Activated naive CD4-positive, alpha-beta T cell treated with anti-CD3 and anti-CD28 coated beads for 36 hours (primary cell): ENCODE measurements at regions of chr18 and their contacts with region 1.

Region 1: DNA sequence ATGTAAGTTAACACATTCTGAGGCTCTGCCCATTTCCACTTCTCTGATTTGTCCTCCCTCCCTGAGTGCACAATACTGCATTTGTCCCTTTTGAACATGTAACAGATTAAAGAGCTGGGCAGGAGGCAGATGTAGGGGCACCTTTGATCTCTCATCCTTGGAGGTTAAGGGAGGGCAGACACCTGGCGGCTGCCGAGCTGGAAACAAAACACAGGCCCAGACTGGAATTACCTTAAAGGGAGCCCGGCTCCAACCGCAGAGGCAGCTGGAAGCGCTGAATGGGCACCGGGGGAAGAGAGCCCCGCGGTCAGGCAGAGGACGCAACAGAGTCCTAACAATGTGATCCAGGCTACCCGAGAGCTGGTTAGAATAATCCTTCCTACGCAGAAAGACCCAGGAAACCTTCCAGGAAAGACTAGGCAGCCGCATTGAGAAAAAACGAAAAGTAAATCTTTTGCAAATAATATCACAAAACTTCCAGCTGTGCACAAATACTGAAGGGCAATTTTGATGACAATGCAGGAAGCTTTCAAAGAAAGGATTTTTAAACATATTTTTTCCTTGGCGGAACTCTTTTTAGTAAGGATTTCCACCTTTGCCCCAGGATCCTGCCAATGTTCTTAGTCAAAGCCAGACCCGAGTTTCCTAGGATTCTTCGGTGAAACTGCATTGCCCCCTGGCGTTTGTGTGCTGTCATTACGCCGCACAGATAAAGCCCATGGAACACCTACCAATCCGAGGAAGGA is 216.0 kb downstream of the TGIF1 start:
- DNase-seq: peak; percentile 84
- H3K4me3 Mint-ChIP-seq: peak overlapping the region; percentile 38
- H3K27ac Mint-ChIP-seq: no peak overlapping the region
- H3K4me1 Mint-ChIP-seq: peaks cover 26% of the 10 kb centered on the region
- H3K27me3 Mint-ChIP-seq: no peaks in the 10 kb centered on the region

Region 2: GRCh38 chr18:3151399-3152264 is 514.3 kb before region 1 on chr18:
- CTCF ChIA-PET with region 1: no interaction called
- intact Hi-C with region 1: loop called (anchors 10 kb)
- DNase-seq: no peak
- H3K4me3 Mint-ChIP-seq: no peak overlapping the region
- H3K27ac Mint-ChIP-seq: no peak overlapping the region
- H3K4me1 Mint-ChIP-seq: peaks cover 6% of the 10 kb centered on the region
- H3K27me3 Mint-ChIP-seq: no peaks in the 10 kb centered on the region

Region 3: GRCh38 chr18:3281456-3282400 is 384.2 kb before region 1 on chr18:
- CTCF ChIA-PET with region 1: interaction called, 138 read pairs
- intact Hi-C with region 1: loop called (anchors 1 kb)
- DNase-seq: no peak
- H3K4me3 Mint-ChIP-seq: no peak overlapping the region
- H3K27ac Mint-ChIP-seq: no peak overlapping the region
- H3K4me1 Mint-ChIP-seq: peaks cover 6% of the 10 kb centered on the region
- H3K27me3 Mint-ChIP-seq: no peaks in the 10 kb centered on the region

Region 4: DNA sequence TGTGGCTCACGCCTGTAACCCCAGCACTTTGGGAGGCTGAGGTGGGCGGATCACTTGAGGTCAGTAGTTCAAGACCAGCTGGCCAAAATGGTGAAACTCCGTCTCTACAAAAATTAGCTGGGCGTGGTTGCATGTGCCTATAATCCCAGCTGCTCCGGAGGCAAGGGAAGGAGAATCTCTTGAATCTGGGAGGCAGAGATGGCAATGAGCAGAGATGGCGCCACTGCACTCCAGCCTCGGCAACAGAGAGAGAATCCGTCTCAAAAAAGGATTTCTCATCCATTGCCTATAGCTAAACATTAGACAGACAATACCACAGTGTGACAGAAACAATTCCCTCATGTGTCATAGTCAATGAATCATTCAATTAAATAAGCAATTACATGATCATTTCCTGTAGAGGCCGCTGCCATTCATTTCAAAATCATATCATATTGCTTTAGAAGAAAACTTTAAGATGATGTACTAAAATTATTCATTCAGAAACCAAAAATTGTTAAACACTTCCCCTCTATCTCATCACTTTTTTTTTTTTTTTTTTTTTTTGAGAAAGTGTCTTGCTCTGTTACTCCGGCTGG is 285.5 kb before region 1 on chr18:
- CTCF ChIA-PET with region 1: interaction called, 10 read pairs
- intact Hi-C with region 1: loop called (anchors 1 kb)
- DNase-seq: peak; percentile 37
- H3K4me3 Mint-ChIP-seq: no peak overlapping the region
- H3K27ac Mint-ChIP-seq: no peak overlapping the region
- H3K4me1 Mint-ChIP-seq: peaks cover 7% of the 10 kb centered on the region
- H3K27me3 Mint-ChIP-seq: no peaks in the 10 kb centered on the region

Region 5: GRCh38 chr18:3454365-3455089 is 211.4 kb before region 1 on chr18:
- CTCF ChIA-PET with region 1: interaction called, 47 read pairs
- intact Hi-C with region 1: loop called (anchors 1 kb)
- DNase-seq: peak; percentile 31
- H3K4me3 Mint-ChIP-seq: peak overlapping the region; percentile 89
- H3K27ac Mint-ChIP-seq: peak overlapping the region; percentile 99
- H3K4me1 Mint-ChIP-seq: peaks cover 63% of the 10 kb centered on the region
- H3K27me3 Mint-ChIP-seq: no peaks in the 10 kb centered on the region

Region 6: DNA sequence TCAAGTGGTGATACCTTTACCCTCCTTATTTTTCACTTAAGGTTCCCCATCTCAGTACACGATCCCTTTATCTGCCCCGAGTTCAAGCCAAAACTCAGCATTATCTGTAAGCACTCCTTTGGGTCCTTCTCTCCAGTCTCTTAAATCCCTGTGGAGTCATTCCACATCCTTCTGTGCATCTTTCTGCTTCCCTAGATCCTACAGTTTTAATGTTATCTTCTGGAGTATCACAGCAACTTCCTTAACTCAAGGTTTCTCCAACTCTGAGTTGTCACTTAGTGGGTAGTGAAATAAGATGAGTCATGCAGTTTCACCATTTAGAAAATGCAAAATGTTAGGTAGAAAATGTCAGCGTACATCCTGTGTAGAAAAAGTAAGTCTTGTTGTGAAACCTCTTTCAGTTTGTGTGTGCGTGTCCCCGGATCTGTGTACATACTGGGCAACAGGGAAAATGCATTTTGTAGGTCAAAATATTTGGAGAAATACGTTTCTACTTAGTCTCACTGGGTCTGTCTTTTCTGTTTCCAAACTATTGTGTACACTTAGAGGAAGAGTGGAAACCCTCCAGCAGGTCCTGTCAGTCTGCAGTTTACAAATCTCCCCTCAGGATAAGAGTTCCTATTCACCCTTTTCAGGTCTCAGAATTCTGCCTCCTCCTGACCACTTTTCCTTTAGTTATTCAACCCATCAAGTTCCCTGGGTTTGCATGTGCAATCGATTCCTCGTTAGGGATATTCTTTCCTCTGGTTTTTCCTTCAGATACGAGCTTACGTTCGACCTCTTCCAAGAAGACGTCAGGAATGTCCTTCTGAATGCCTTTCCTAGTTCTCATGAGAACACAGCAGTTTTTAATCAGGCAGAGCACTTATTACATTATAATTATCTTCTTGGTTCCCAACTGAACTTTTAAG is 61.2 kb before region 1 on chr18:
- CTCF ChIA-PET with region 1: interaction called, 34 read pairs
- intact Hi-C with region 1: no loop called
- DNase-seq: peak; percentile 60
- H3K4me3 Mint-ChIP-seq: no peak overlapping the region
- H3K27ac Mint-ChIP-seq: no peak overlapping the region
- H3K4me1 Mint-ChIP-seq: peaks cover 13% of the 10 kb centered on the region
- H3K27me3 Mint-ChIP-seq: no peaks in the 10 kb centered on the region

Region 7: GRCh38 chr18:3652380-3653262 is 13.3 kb before region 1 on chr18:
- CTCF ChIA-PET with region 1: interaction called, 31 read pairs
- intact Hi-C with region 1: no loop called
- DNase-seq: peak; percentile 84
- H3K4me3 Mint-ChIP-seq: no peak overlapping the region
- H3K27ac Mint-ChIP-seq: peak overlapping the region; percentile 84
- H3K4me1 Mint-ChIP-seq: peaks cover 27% of the 10 kb centered on the region
- H3K27me3 Mint-ChIP-seq: no peaks in the 10 kb centered on the region